Vagina (tissue), 2 donors: ENCODE measurements at regions of chr1 and their contacts with region 1.

Region 1: DNA sequence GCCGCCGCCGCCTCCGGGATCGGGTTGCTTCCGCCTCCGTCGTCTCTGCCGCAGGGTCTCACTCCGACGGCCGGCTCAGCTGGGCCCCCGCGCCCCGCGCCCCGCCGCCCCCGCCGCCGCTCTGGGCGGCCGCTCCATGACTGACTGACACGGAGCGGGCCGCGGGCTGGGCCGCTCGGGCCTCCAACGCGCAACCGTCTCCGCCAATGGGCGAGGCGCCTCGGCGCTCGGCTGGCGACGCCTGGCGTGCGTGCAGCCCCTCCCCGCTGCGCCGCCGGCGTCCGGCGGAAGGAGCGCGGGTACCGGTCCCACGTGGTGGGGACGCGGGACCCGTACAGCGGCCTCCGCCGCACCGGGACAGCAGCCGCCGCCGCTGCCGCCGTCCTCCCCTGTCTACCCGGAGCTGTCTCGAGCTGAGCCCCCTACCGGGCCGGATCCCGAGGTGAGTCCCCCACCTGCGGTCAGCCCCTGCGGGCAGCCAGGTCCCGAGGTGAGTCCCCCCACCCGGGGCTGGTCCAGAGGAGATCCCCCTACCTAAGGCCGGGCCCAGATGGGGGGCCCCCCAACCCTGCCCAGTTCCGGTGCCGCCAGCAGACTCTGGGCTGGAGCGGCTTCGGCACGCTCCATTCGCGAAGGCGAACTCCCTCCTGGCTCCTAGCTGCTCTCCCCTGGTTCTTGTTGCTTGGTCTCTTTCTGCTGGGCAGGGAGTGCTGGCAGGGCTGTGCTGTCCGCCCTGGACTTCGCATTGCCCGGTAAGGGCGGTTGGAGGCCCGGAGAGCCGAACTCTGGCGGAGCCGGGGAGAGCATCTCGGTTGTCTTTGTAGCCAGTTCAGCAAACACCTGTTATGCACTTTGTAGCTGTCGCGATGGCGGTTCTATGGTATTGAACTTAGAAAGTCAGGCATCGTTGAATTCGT is at the starts of genes TAF5L and URB2:
- DNase-seq: no peak
- H3K4me3 ChIP-seq: peak within 1 kb of the TSS; percentile 81 to 93
- H3K27ac ChIP-seq: peak within 1 kb of the TSS; percentile 88
- H3K4me1 ChIP-seq: peaks cover 47% of the 10 kb centered on the region
- H3K27me3 ChIP-seq: no peaks in the 10 kb centered on the region
- CTCF ChIP-seq: no peak
- POLR2A ChIP-seq: no peak
- total RNA-seq, gene TAF5L: 12.5 TPM
- total RNA-seq, gene URB2: 9.3 TPM

Region 2: GRCh38 chr1:229558571-229559335 is 67.4 kb before region 1 on chr1 and contains the start of gene ABCB10:
- intact Hi-C with region 1: loop called (anchors 2 kb)
- DNase-seq: peak in 1 of 2 donors; percentile 93
- H3K4me3 ChIP-seq: peak within 1 kb of the TSS; percentile 81 to 97
- H3K27ac ChIP-seq: peak within 1 kb of the TSS; percentile 91
- H3K4me1 ChIP-seq: peaks cover 39% of the 10 kb centered on the region
- H3K27me3 ChIP-seq: no peaks in the 10 kb centered on the region
- CTCF ChIP-seq: peak in 2 of 3 experiments; percentile 55 to 59
- POLR2A ChIP-seq: peak in 1 of 2 donors; percentile 7
- total RNA-seq, gene ABCB10: 12.5 TPM

Region 3: DNA sequence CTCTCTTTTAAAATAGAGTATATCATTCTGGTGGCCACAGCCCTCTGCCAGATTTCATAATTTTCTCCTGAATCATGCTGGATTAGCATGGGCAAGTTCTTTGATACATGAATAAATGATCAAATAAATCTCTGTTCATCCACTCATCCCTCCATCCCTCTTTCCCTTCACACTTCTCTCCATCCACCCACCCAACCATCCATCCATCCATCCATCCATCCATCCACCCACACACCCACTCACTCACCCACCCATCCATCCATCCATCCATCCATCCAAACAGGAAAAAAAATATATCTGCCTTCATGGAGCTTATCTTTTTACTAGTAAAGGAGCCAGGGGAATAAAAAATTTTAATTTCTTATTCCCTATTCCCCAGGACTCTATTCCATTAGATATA is 49.2 kb after region 1 on chr1:
- intact Hi-C with region 1: no loop called
- DNase-seq: no peak
- H3K4me3 ChIP-seq: no peak overlapping the region
- H3K27ac ChIP-seq: no peak overlapping the region
- H3K4me1 ChIP-seq: no peaks in the 10 kb centered on the region
- H3K27me3 ChIP-seq: no peaks in the 10 kb centered on the region
- CTCF ChIP-seq: no peak
- POLR2A ChIP-seq: no peak